ENCODE measurements at regions of chr3 and their contacts with region 1.

Region 1: GRCh38 chr3:170414202-170414663 is 4.4 kb upstream of the CLDN11 start:
- DNase-seq: peak; percentile 13
- ATAC-seq: peak; percentile 83
- H3K4me3 ChIP-seq: no peak overlapping the region
- H3K27ac ChIP-seq: no peak overlapping the region
- H3K4me1 ChIP-seq: no peaks in the 10 kb centered on the region
- H3K27me3 ChIP-seq: peaks cover 5% of the 10 kb centered on the region in 2 experiments; a peak in 3 of 4 replicates
- CTCF ChIP-seq: peak; percentile 93 to 99 (median 98)
- EP300 ChIP-seq: no peak
- POLR2A ChIP-seq: no peak
- RAD21 ChIP-seq: peak; percentile 100

Region 2: GRCh38 chr3:170189398-170190256 is 224.6 kb before region 1 on chr3:
- CTCF ChIA-PET with region 1: interaction called, 19 read pairs
- POLR2A ChIA-PET with region 1: no interaction called
- RAD21 ChIA-PET with region 1: interaction called, 9 read pairs
- SMC1A ChIA-PET with region 1: interaction called, 10 read pairs
- in situ Hi-C with region 1: no loop called
- intact Hi-C with region 1: loop called (anchors 2 kb)
- DNase-seq: no peak
- ATAC-seq: peak; percentile 56
- H3K4me3 ChIP-seq: no peak overlapping the region
- H3K27ac ChIP-seq: no peak overlapping the region
- H3K4me1 ChIP-seq: peaks cover 4% of the 10 kb centered on the region; the same call in 1 of the 2 replicates
- H3K27me3 ChIP-seq: no peaks in the 10 kb centered on the region
- CTCF ChIP-seq: no peak
- EP300 ChIP-seq: no peak
- POLR2A ChIP-seq: no peak
- RAD21 ChIP-seq: no peak

Region 3: GRCh38 chr3:170233530-170233929 is 180.7 kb before region 1 on chr3:
- CTCF ChIA-PET with region 1: no interaction called
- POLR2A ChIA-PET with region 1: no interaction called
- RAD21 ChIA-PET with region 1: no interaction called
- SMC1A ChIA-PET with region 1: no interaction called
- in situ Hi-C with region 1: no loop called
- intact Hi-C with region 1: no loop called
- DNase-seq: no peak
- ATAC-seq: no peak
- H3K4me3 ChIP-seq: no peak overlapping the region
- H3K27ac ChIP-seq: no peak overlapping the region
- H3K4me1 ChIP-seq: no peaks in the 10 kb centered on the region
- H3K27me3 ChIP-seq: no peaks in the 10 kb centered on the region
- CTCF ChIP-seq: no peak
- EP300 ChIP-seq: no peak
- POLR2A ChIP-seq: no peak
- RAD21 ChIP-seq: no peak

Region 4: GRCh38 chr3:170368921-170369320 is 45.3 kb before region 1 on chr3:
- CTCF ChIA-PET with region 1: interaction called, 10 read pairs
- POLR2A ChIA-PET with region 1: no interaction called
- RAD21 ChIA-PET with region 1: no interaction called
- SMC1A ChIA-PET with region 1: interaction called, 5 read pairs
- in situ Hi-C with region 1: no loop called
- intact Hi-C with region 1: no loop called
- DNase-seq: no peak
- ATAC-seq: no peak; the same call in 2 of the 3 replicates
- H3K4me3 ChIP-seq: no peak overlapping the region
- H3K27ac ChIP-seq: no peak overlapping the region
- H3K4me1 ChIP-seq: peaks cover 9% of the 10 kb centered on the region
- H3K27me3 ChIP-seq: no peaks in the 10 kb centered on the region
- CTCF ChIP-seq: no peak; a peak in 2 of 6 replicates
- EP300 ChIP-seq: no peak
- POLR2A ChIP-seq: no peak
- RAD21 ChIP-seq: peak; percentile 37; the same call in 1 of the 2 replicates

Region 5: GRCh38 chr3:170397579-170398177 is 16.6 kb before region 1 on chr3:
- CTCF ChIA-PET with region 1: interaction called, 18 read pairs
- POLR2A ChIA-PET with region 1: no interaction called
- RAD21 ChIA-PET with region 1: interaction called, 4 read pairs
- SMC1A ChIA-PET with region 1: interaction called, 10 read pairs
- in situ Hi-C with region 1: no loop called
- intact Hi-C with region 1: no loop called
- DNase-seq: no peak
- ATAC-seq: no peak
- H3K4me3 ChIP-seq: no peak overlapping the region
- H3K27ac ChIP-seq: no peak overlapping the region
- H3K4me1 ChIP-seq: no peaks in the 10 kb centered on the region
- H3K27me3 ChIP-seq: no peaks in the 10 kb centered on the region
- CTCF ChIP-seq: no peak
- EP300 ChIP-seq: no peak
- POLR2A ChIP-seq: no peak
- RAD21 ChIP-seq: no peak

Region 6: GRCh38 chr3:170499565-170500156 is 85.4 kb after region 1 on chr3:
- CTCF ChIA-PET with region 1: interaction called, 10 read pairs
- POLR2A ChIA-PET with region 1: no interaction called
- RAD21 ChIA-PET with region 1: no interaction called
- SMC1A ChIA-PET with region 1: no interaction called
- in situ Hi-C with region 1: no loop called
- intact Hi-C with region 1: no loop called
- DNase-seq: no peak
- ATAC-seq: peak; percentile 89
- H3K4me3 ChIP-seq: no peak overlapping the region
- H3K27ac ChIP-seq: no peak overlapping the region
- H3K4me1 ChIP-seq: no peaks in the 10 kb centered on the region
- H3K27me3 ChIP-seq: peaks cover 0 to 2% of the 10 kb centered on the region in 2 experiments; a peak in 1 of 4 replicates
- CTCF ChIP-seq: peak; percentile 53 to 65 (median 59); a peak in 5 of 6 replicates
- EP300 ChIP-seq: no peak
- POLR2A ChIP-seq: no peak
- RAD21 ChIP-seq: peak; percentile 66

Region 7: DNA sequence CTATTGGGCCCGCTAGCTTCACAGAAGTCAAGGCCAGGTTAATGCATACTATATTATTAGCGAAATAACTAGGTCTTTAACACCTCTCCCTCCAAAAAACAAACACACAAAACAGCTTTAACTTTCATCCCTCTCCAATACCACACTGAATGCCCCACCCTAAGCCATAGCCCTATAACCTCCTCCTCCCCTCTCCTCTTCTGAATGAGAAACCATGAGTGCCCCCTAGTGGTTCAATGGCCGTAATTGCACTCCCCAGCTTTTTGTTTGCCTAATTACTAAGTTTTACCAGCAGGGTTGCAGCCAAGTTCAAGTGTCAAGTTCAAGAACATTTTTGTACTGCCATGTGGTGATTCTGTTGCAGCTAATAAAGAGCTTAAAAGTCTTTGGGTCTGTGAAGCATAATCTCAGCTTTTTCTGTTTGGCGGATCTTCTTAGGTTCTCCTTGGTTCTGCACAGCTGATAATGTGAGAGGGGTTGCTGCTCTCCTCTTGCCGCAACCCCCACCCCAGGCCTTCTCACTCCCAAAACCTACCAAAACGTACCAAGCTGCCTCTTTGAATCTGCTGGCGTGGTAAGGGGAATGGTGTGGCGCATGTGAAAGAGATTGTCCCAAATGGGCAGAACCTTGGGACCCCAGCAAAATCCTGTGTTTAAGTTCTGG is 397.8 kb after region 1 on chr3:
- CTCF ChIA-PET with region 1: interaction called, 264 read pairs
- POLR2A ChIA-PET with region 1: no interaction called
- RAD21 ChIA-PET with region 1: interaction called, 110 read pairs
- SMC1A ChIA-PET with region 1: interaction called, 114 read pairs
- in situ Hi-C with region 1: loop called (anchors 5 kb)
- intact Hi-C with region 1: loop called (anchors 1 kb)
- DNase-seq: peak; percentile 30
- ATAC-seq: peak; percentile 91
- H3K4me3 ChIP-seq: no peak overlapping the region
- H3K27ac ChIP-seq: no peak overlapping the region
- H3K4me1 ChIP-seq: no peaks in the 10 kb centered on the region
- H3K27me3 ChIP-seq: no peaks in the 10 kb centered on the region; a peak in 2 of 4 replicates
- CTCF ChIP-seq: peak; percentile 85 to 95 (median 88)
- EP300 ChIP-seq: no peak
- POLR2A ChIP-seq: no peak
- RAD21 ChIP-seq: peak; percentile 93